ENCODE measurements at regions of chr11 and their contacts with region 1.

Region 1: DNA sequence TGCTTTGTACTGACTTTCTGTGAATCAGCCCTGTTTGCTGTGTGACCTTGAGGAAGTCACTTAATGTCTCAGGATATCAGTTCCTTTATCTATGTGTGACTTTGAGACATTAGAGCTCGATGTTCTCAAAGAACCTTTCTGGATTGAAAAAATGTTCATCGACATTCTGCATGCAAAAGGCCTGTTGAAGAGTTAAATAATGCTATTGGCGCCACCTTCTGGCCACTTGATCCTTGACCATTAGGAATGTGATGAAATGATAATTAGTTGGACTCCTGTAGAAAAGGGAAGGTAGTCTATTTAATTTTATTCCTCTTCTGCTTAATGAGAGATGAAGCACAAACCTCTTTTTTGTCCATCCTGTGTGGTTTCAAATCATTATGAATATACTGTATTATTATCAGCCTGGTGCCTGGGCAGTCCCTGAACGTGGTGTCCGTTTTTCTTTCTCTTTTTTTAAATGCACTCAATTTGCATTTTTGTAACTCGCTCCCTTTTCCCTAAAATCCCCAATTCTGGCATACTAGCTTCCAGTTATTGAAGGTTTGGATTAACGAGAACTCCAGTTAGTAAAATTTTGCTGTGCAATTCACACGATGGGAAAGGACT is 20.7 kb downstream of the ELF5 start:
- DNase-seq: peak in 3 of 9 donors; percentile 7 to 19 (median 14)
- ATAC-seq: peak; percentile 38
- H3K4me3 ChIP-seq: no peak overlapping the region
- H3K4me3 Mint-ChIP-seq: no peak overlapping the region
- H3K27ac ChIP-seq: no peak overlapping the region
- H3K27ac Mint-ChIP-seq: no peak overlapping the region
- H3K4me1 ChIP-seq: no peaks in the 10 kb centered on the region
- H3K4me1 Mint-ChIP-seq: peaks cover 0 to 3% (median 0%) of the 10 kb centered on the region in 7 donors
- H3K27me3 ChIP-seq: no peaks in the 10 kb centered on the region
- H3K27me3 Mint-ChIP-seq: peaks cover 0 to 10% (median 3%) of the 10 kb centered on the region in 5 donors

Region 2: GRCh38 chr11:34366522-34366921 is 126.4 kb before region 1 on chr11:
- CTCF ChIA-PET with region 1: no interaction called
- POLR2A ChIA-PET with region 1: no interaction called
- intact Hi-C with region 1: loop called in 1 of 2 experiments (anchors 5 kb)
- DNase-seq: no peak
- ATAC-seq: no peak
- H3K4me3 ChIP-seq: no peak overlapping the region
- H3K4me3 Mint-ChIP-seq: no peak overlapping the region
- H3K27ac ChIP-seq: no peak overlapping the region
- H3K27ac Mint-ChIP-seq: no peak overlapping the region
- H3K4me1 ChIP-seq: no peaks in the 10 kb centered on the region
- H3K4me1 Mint-ChIP-seq: peaks cover 3 to 21% (median 14%) of the 10 kb centered on the region in 7 donors
- H3K27me3 ChIP-seq: no peaks in the 10 kb centered on the region
- H3K27me3 Mint-ChIP-seq: peaks cover 0 to 41% (median 10%) of the 10 kb centered on the region in 5 donors

Region 3: DNA sequence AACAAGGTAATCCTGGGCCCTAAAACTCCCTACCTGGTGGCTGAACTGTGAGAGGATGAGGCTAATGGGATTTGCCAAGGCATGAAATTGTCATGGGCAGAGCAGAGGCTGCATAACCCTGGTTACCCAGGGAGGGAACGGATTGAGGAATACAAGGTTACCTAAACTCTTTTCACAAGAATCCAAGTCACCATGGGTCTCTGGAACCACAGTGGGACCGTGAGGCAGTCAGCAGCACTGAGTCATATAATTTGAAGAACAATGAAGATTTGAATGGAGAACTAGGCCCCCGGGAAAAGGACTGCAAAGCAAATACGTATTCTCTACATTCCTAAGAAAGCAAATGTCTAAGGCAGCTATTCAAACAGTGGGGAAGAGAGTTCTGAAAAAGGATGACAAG is 34.4 kb before region 1 on chr11:
- CTCF ChIA-PET with region 1: no interaction called
- POLR2A ChIA-PET with region 1: no interaction called
- intact Hi-C with region 1: no loop called
- DNase-seq: no peak
- ATAC-seq: no peak
- H3K4me3 ChIP-seq: no peak overlapping the region
- H3K4me3 Mint-ChIP-seq: no peak overlapping the region
- H3K27ac ChIP-seq: no peak overlapping the region
- H3K27ac Mint-ChIP-seq: no peak overlapping the region
- H3K4me1 ChIP-seq: no peaks in the 10 kb centered on the region
- H3K4me1 Mint-ChIP-seq: no peaks in the 10 kb centered on the region
- H3K27me3 ChIP-seq: no peaks in the 10 kb centered on the region
- H3K27me3 Mint-ChIP-seq: no peaks in the 10 kb centered on the region